Left lung (tissue), 14 donors: ENCODE measurements at regions of chr13 and their contacts with region 1.

Region 1: DNA sequence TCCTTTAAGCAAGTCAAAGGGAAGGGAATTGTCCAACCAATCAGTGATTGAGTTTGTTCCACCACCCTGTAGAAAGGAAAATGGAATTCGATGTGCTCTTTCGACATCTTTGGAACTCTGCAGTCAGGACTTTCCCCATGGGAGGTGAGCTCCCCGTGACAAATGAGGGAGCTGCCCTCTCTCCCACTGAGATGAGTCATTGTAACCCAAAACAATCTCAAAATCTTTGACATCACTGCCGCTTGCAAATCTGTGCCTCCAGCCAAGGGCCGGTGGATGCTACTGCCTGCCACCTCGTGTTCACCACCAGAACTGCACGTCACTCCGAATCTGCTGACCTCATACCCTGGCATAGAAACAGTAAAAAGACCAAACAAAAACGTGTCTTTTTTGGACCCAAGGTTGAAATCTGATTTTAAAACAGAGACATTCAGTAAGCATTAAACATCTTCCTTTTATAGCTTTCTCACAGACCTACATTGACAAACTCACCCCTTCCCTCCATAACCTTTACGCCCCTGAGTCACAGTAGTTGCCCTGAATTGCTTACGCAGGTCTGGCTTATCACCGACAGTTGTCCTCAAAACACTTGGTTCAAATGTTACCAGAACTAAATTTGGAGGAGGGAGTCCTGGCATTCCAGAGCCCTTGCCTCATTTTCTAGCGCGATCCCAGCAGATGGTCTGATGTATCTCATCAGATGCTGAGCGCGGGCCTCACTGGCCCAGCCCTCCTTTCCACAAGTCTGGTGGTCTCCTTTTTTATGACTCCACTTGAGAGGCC is 105.2 kb downstream of the COL4A2 start:
- DNase-seq: peak in 3 of 4 donors; percentile 82 to 92 (median 84)
- ATAC-seq: peak; percentile 89
- H3K4me3 ChIP-seq: no peak overlapping the region
- H3K27ac ChIP-seq: peak overlapping the region; percentile 49 to 51
- H3K4me1 ChIP-seq: peaks cover 0 to 34% of the 10 kb centered on the region in 2 donors
- H3K27me3 ChIP-seq: peaks cover 0 to 11% of the 10 kb centered on the region in 2 donors
- CTCF ChIP-seq: peak; percentile 82 to 83

Region 2: GRCh38 chr13:110233181-110233950 is 179.0 kb before region 1 on chr13:
- intact Hi-C with region 1: loop called (anchors 10 kb)
- DNase-seq: peak in 2 of 4 donors; percentile 53 to 69
- ATAC-seq: peak; percentile 38
- H3K4me3 ChIP-seq: no peak overlapping the region
- H3K27ac ChIP-seq: peak overlapping the region; percentile 45 to 55
- H3K4me1 ChIP-seq: peaks cover 21 to 36% of the 10 kb centered on the region in 2 donors
- H3K27me3 ChIP-seq: peaks cover 0 to 7% of the 10 kb centered on the region in 2 donors
- CTCF ChIP-seq: no peak